WTC11 (cell line): ENCODE measurements at regions of chr11 and their contacts with region 1.

Region 1: GRCh38 chr11:65817835-65818742 is 15.7 kb upstream of the SNX32 start:
- DNase-seq: peak; percentile 96
- ATAC-seq: peak; percentile 87
- H3K4me3 Mint-ChIP-seq: peak overlapping the region; percentile 72
- H3K27ac Mint-ChIP-seq: no peak overlapping the region
- H3K4me1 Mint-ChIP-seq: 0 out of 2 replicates have a peak, but pooled peaks cover 5% of the 10 kb centered on the region
- H3K27me3 Mint-ChIP-seq: peaks cover 15% of the 10 kb centered on the region
- CTCF ChIP-seq: peak; percentile 100

Region 2: GRCh38 chr11:65711785-65712632 is 106.1 kb before region 1 on chr11 and contains the start of gene KAT5:
- CTCF ChIA-PET with region 1: interaction called, 24 read pairs
- POLR2A ChIA-PET with region 1: interaction called, 3 read pairs
- DNase-seq: peak; percentile 99
- ATAC-seq: peak; percentile 93
- H3K4me3 Mint-ChIP-seq: peak within 1 kb of the TSS; percentile 82
- H3K27ac Mint-ChIP-seq: peak within 1 kb of the TSS; percentile 96
- H3K4me1 Mint-ChIP-seq: 0 out of 2 replicates have a peak, but pooled peaks cover 3% of the 10 kb centered on the region
- H3K27me3 Mint-ChIP-seq: peaks cover 6% of the 10 kb centered on the region
- CTCF ChIP-seq: peak; percentile 86
- total RNA-seq, gene KAT5: 44.9 to 56.6 TPM (median 46.0 TPM) in 3 replicates

Region 3: GRCh38 chr11:65720237-65720934 is 97.7 kb before region 1 on chr11 and contains the start of gene RNASEH2C:
- CTCF ChIA-PET with region 1: interaction called, 10 read pairs
- POLR2A ChIA-PET with region 1: interaction called, 3 read pairs
- DNase-seq: peak; percentile 82
- ATAC-seq: peak; percentile 87
- H3K4me3 Mint-ChIP-seq: peak within 1 kb of the TSS; percentile 98
- H3K27ac Mint-ChIP-seq: peak within 1 kb of the TSS; percentile 63; the same call in 1 of the 2 replicates
- H3K4me1 Mint-ChIP-seq: peaks cover 9% of the 10 kb centered on the region
- H3K27me3 Mint-ChIP-seq: peaks cover 4% of the 10 kb centered on the region; the same call in 1 of the 2 replicates
- CTCF ChIP-seq: no peak
- total RNA-seq, gene RNASEH2C: 42.1 to 53.0 TPM (median 52.2 TPM) in 3 replicates